AG04450 (cell line): ENCODE measurements at regions of chr4 and their contacts with region 1.

Region 1: GRCh38 chr4:57094832-57095223 is 15.4 kb downstream of the IGFBP7 start:
- DNase-seq: no peak
- H3K4me3 ChIP-seq: no peak overlapping the region
- H3K27ac ChIP-seq: no peak overlapping the region
- H3K27me3 ChIP-seq: no peaks in the 10 kb centered on the region
- CTCF ChIP-seq: no peak

Region 2: DNA sequence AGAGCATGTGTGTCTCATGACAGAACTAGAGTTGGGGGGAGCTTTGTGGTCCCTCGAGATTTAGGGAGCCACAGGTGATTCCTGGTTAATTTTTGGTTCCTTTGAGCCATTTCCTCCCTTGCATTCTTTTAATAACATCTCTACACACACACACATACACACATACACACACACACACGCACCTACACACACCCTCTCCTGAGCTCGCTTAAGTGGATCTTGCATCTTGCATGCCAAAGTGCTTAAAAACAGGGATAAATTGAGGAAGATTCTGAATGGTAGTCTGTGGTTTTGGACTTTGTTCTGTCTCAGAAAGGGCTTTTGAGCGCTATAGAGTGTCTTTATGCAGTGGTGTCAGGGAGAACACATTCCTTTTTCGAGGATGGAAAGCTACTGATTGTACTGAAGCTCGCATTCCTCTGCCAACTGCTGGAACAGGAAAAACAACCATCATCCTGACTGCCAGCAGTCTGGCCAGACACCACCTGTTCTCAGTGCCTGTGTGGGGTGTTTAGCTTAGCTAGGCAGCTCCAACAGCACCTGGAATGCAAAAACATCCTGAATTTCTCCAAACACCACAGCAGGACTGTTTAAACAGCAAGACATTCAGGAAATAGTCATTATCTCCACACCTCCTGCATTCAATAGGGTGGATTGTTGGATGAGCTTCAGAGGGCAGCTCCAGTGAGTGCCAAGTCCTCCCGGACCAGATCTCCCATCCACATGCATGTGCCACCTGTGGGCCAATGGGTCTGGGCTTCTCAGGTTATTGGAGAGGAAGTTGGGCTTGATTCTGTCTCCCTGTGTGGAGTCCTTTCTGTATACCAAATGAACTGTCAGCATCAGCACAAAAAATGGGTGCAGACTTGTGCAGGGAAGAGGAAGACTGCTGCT is 37.3 kb after region 1 on chr4:
- CTCF ChIA-PET with region 1: interaction called, 10 read pairs
- POLR2A ChIA-PET with region 1: no interaction called
- DNase-seq: no peak
- H3K4me3 ChIP-seq: no peak overlapping the region
- H3K27ac ChIP-seq: no peak overlapping the region
- H3K27me3 ChIP-seq: no peaks in the 10 kb centered on the region
- CTCF ChIP-seq: no peak